ENCODE measurements at regions of chr16 and their contacts with region 1.

Region 1: DNA sequence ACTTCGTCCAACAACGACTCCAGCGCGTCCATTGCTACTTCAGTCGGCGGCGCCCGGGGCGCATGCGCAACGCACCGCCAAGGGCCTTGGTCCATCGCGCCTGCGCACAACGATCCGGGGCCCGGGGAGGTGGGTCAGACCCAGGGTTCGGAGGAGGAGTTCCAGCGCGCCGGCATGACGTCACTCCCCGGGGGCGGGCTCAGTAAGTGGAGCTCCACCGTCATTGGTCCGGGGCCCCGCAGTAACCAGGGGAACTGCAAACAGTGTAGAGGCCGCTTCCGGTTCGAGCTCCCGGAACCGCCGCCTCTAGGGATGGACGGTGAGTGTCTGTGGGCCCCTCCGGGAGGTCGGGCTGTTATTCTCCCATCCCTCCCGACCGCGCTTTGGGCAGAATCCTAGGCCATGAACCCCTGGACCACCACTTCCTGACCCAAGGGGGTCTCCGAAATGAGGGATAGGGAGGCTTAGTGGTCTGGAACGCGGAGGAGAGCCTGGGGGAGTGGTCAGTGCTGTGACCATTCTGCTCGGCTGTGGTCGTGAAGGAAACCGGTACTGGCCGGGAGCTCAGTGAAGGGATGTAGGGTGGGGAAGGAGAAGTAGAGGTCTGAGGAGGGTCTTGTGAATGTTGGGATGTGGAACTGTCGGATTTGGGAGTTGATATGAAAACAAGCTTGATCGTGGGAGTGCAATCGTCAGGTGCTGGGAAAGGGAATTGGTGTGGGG is at the starts of genes GTF3C1 and KATNIP:
- DNase-seq: peak; percentile 99 to 100
- H3K4me3 ChIP-seq: peak within 1 kb of the TSS; percentile 78 to 85
- H3K27ac ChIP-seq: peak within 1 kb of the TSS; percentile 76 to 82
- H3K4me1 ChIP-seq: peaks cover 0 to 36% (median 34%) of the 10 kb centered on the region in 4 donors
- H3K27me3 ChIP-seq: no peaks in the 10 kb centered on the region
- CTCF ChIP-seq: no peak

Region 2: DNA sequence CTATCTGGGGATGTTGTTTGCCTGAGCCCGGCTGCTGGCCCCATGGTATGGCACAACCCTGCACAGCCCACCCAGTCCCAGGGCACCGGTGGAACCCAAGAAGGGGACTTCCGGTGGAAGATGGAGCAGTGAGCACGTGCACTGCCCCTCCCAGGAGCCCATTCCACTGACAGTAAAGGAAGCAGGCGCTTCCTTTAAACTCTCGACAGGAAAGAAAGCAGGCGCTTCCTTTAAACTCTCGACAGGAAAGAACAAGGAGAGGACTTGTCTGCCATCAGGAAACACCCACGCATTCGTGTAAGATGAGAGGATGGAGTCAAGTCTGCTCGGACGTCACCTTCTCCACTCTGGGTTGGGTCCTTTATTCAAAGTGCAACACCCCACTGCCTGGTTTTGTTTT is 94.3 kb before region 1 on chr16:
- intact Hi-C with region 1: no loop called
- DNase-seq: no peak
- H3K4me3 ChIP-seq: no peak overlapping the region
- H3K27ac ChIP-seq: no peak overlapping the region
- H3K4me1 ChIP-seq: no peaks in the 10 kb centered on the region
- H3K27me3 ChIP-seq: peaks cover 0 to 6% of the 10 kb centered on the region in 2 donors
- CTCF ChIP-seq: no peak

Region 3: DNA sequence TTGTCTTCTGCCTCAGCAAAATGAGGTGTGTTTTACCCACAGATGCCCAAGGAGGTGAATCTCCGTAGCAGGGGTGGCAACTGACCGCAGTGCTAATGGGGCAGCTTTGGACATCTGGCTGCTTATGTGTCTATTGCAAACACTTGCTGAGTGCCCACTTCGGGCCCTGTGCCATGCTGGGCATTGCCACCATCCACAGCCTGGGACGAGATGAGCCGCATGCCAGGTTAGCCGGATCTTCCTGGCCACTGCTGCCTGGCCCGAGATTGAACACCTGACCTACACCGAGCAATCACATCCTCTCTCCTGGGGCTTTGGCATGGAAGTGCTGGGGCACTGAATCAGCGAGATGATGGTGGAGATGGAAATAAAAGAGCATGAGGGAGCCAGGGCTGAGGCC is 274.8 kb after region 1 on chr16:
- intact Hi-C with region 1: no loop called
- DNase-seq: no peak
- H3K4me3 ChIP-seq: no peak overlapping the region
- H3K27ac ChIP-seq: no peak overlapping the region
- H3K4me1 ChIP-seq: no peaks in the 10 kb centered on the region
- H3K27me3 ChIP-seq: no peaks in the 10 kb centered on the region
- CTCF ChIP-seq: no peak

Region 4: DNA sequence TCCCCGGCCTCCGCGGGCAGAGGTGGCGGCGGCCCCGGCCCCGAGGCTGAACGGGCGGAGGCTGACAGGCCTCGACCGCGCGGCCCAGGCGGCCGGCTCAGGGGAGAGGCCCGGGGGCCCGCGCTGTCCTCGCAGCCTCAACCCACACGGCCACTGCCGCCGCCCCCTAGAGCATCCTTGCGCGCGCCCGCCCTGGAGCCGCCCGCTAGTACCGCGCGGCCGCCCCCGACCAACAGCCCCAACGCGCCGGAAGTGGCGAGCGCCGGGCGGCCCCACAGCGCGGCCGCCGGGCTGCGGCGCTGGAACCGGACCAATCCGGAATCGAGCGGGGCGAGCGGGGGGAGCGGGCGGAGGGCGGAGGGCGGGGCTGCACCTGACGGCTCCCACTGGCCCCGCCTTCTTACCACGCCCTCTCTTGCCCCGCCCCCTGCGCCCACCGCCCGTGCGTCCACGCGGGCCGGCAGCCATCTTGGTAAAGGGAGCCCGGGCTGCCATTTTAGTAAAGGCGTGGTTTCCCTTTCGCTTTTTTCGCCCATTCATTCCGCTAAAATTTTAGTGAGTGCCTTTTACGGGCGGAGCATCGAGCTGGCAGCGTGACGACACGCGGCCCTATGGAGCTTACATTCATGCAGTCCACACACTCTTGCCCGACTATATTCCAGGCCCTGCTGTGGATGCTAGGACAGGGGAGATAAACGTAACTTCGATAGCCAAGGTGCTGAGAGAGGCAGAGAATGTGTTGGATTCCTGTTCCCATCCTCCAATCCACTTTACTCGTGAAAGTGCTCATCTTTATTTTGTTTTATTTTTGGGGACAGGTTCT is 661.9 kb after region 1 on chr16 and contains the start of gene XPO6:
- intact Hi-C with region 1: loop called (anchors 5 kb)
- DNase-seq: peak; percentile 92 to 97
- H3K4me3 ChIP-seq: peak within 1 kb of the TSS; percentile 68 to 78
- H3K27ac ChIP-seq: peak within 1 kb of the TSS; percentile 86 to 92
- H3K4me1 ChIP-seq: peaks cover 0 to 25% (median 11%) of the 10 kb centered on the region in 4 donors
- H3K27me3 ChIP-seq: no peaks in the 10 kb centered on the region
- CTCF ChIP-seq: no peak